CD4-positive, alpha-beta memory T cell (primary cell): ENCODE measurements at regions of chr12 and their contacts with region 1.

Region 1: GRCh38 chr12:106223485-106224354 is 24.1 kb downstream of the CKAP4 start:
- DNase-seq: peak; percentile 57 to 73 (median 68)
- H3K4me3 ChIP-seq: no peak overlapping the region
- H3K4me3 Mint-ChIP-seq: peak overlapping the region in 1 of 8 donors; percentile 26
- H3K27ac ChIP-seq: no peak overlapping the region
- H3K27ac Mint-ChIP-seq: peak overlapping the region in 4 of 7 donors; percentile 2 to 73 (median 58)
- H3K4me1 ChIP-seq: peaks cover 18% of the 10 kb centered on the region
- H3K4me1 Mint-ChIP-seq: peaks cover 14 to 27% (median 22%) of the 10 kb centered on the region in 4 donors
- H3K27me3 ChIP-seq: no peaks in the 10 kb centered on the region
- H3K27me3 Mint-ChIP-seq: peaks cover 7 to 12% of the 10 kb centered on the region in 2 donors

Region 2: GRCh38 chr12:106239241-106239950 is 15.7 kb after region 1 on chr12:
- CTCF ChIA-PET with region 1: interaction called, 15 read pairs
- POLR2A ChIA-PET with region 1: no interaction called
- intact Hi-C with region 1: no loop called
- DNase-seq: no peak
- H3K4me3 ChIP-seq: no peak overlapping the region
- H3K4me3 Mint-ChIP-seq: no peak overlapping the region
- H3K27ac ChIP-seq: no peak overlapping the region
- H3K27ac Mint-ChIP-seq: no peak overlapping the region
- H3K4me1 ChIP-seq: no peaks in the 10 kb centered on the region
- H3K4me1 Mint-ChIP-seq: peaks cover 1 to 4% (median 3%) of the 10 kb centered on the region in 4 donors
- H3K27me3 ChIP-seq: no peaks in the 10 kb centered on the region
- H3K27me3 Mint-ChIP-seq: no peaks in the 10 kb centered on the region

Region 3: DNA sequence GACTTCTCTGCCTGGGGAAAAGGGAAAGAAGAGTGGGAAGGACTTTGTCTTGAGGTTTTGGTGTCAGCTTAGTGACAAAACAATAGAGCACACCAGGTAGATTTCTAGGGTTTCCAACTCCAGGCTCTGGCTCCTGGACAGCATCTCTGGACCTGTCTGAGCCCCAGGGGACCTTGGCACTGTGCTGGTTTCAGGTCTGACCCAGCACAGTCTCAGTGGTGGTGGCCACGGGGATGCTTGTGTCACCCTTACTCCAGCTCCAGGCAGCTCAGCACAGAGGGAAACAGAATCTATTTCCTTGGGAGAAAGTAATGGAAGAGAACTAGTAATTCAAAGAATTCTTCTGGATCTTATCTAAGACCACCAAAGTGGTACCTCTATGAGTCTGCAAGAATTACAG is 35.2 kb after region 1 on chr12:
- CTCF ChIA-PET with region 1: interaction called, 12 read pairs
- POLR2A ChIA-PET with region 1: no interaction called
- intact Hi-C with region 1: no loop called
- DNase-seq: no peak
- H3K4me3 ChIP-seq: no peak overlapping the region
- H3K4me3 Mint-ChIP-seq: no peak overlapping the region
- H3K27ac ChIP-seq: no peak overlapping the region
- H3K27ac Mint-ChIP-seq: no peak overlapping the region
- H3K4me1 ChIP-seq: no peaks in the 10 kb centered on the region
- H3K4me1 Mint-ChIP-seq: no peaks in the 10 kb centered on the region
- H3K27me3 ChIP-seq: no peaks in the 10 kb centered on the region
- H3K27me3 Mint-ChIP-seq: no peaks in the 10 kb centered on the region

Region 4: GRCh38 chr12:106296193-106296877 is 72.6 kb after region 1 on chr12:
- CTCF ChIA-PET with region 1: interaction called, 49 read pairs
- POLR2A ChIA-PET with region 1: interaction called, 87 read pairs
- intact Hi-C with region 1: no loop called
- DNase-seq: no peak
- H3K4me3 ChIP-seq: no peak overlapping the region
- H3K4me3 Mint-ChIP-seq: no peak overlapping the region
- H3K27ac ChIP-seq: no peak overlapping the region
- H3K27ac Mint-ChIP-seq: no peak overlapping the region
- H3K4me1 ChIP-seq: peaks cover 16% of the 10 kb centered on the region
- H3K4me1 Mint-ChIP-seq: peaks cover 9 to 19% (median 16%) of the 10 kb centered on the region in 4 donors
- H3K27me3 ChIP-seq: no peaks in the 10 kb centered on the region
- H3K27me3 Mint-ChIP-seq: no peaks in the 10 kb centered on the region

Region 5: DNA sequence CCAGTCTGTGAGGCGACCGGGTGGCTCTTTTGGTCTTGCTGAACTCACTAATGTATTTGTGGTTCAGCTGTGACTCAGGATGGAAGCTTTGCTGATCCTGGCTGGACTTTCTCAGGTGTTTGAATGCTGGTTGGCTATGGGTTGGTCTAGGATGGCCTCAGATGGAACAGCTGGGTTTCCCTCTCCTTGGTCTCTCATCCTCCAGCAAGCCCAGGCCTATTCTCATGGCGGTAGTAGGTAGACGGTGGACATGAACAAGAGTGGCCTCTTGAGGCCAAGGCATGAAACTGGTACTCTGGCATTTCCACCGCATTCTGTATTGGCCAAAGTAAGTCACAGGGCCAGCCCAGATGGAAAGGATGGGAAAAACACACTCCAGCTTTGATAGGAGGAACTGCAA is 122.0 kb after region 1 on chr12:
- CTCF ChIA-PET with region 1: interaction called, 34 read pairs
- POLR2A ChIA-PET with region 1: no interaction called
- intact Hi-C with region 1: no loop called
- DNase-seq: peak in 1 of 5 donors; percentile 9
- H3K4me3 ChIP-seq: no peak overlapping the region
- H3K4me3 Mint-ChIP-seq: no peak overlapping the region
- H3K27ac ChIP-seq: no peak overlapping the region
- H3K27ac Mint-ChIP-seq: peak overlapping the region in 3 of 7 donors; percentile 6 to 48 (median 38)
- H3K4me1 ChIP-seq: no peaks in the 10 kb centered on the region
- H3K4me1 Mint-ChIP-seq: peaks cover 0 to 4% (median under 1%) of the 10 kb centered on the region in 4 donors
- H3K27me3 ChIP-seq: no peaks in the 10 kb centered on the region
- H3K27me3 Mint-ChIP-seq: no peaks in the 10 kb centered on the region

Region 6: GRCh38 chr12:106841510-106842302 is 618.0 kb after region 1 on chr12:
- CTCF ChIA-PET with region 1: interaction called, 3 read pairs
- POLR2A ChIA-PET with region 1: no interaction called
- intact Hi-C with region 1: loop called (anchors 2 kb)
- DNase-seq: peak; percentile 37 to 47 (median 45)
- H3K4me3 ChIP-seq: no peak overlapping the region
- H3K4me3 Mint-ChIP-seq: no peak overlapping the region
- H3K27ac ChIP-seq: no peak overlapping the region
- H3K27ac Mint-ChIP-seq: peak overlapping the region in 3 of 7 donors; percentile 2 to 57 (median 5)
- H3K4me1 ChIP-seq: peaks cover 17% of the 10 kb centered on the region
- H3K4me1 Mint-ChIP-seq: peaks cover 14 to 28% (median 22%) of the 10 kb centered on the region in 4 donors
- H3K27me3 ChIP-seq: no peaks in the 10 kb centered on the region
- H3K27me3 Mint-ChIP-seq: no peaks in the 10 kb centered on the region